ENCODE measurements at regions of chr7 and their contacts with region 1.

Region 1: DNA sequence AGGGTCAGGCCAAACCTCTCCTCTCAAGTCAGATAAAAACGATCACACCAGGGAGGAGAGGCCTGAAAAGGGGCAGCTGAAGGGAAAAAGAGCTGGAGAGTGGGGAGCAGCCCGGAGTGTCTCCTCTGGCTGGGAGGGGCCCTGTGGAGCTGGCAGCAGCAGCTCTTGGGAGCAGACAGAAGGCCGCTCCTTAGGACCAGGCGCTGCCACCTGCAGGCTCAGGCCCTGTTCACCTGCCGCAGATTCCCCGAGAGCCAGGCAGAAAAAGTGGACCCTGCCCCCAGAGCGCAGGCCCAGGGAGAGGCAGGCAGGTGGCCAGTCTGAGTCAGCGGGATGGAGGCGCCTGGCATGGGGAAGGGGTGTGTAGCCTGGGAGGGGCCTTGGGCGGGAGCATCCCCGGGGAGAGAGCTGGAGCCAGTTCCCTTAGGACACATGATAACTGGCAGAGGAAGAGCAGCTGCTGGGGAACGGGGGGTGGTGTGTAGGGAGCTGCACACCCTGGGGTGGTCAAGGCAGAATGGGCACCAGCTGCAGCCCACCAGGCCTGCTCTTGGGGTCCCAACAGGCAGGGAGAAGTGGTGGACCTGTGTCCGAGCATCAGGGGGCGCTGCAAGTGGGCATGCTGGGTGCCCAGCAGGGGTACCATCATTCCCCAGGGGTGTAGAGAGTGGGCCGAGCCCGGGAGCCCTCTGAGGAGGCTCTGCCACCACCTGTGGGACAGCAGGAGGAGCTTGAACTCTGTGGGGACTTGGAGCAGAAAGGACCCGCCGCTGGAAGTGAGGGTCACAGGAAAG is 177.2 kb upstream of the RHEB start:
- DNase-seq: peak; percentile 63
- H3K4me3 ChIP-seq: no peak overlapping the region
- H3K27ac ChIP-seq: peak overlapping the region; percentile 80
- H3K4me1 ChIP-seq: peaks cover 37% of the 10 kb centered on the region
- H3K27me3 ChIP-seq: no peaks in the 10 kb centered on the region
- CTCF ChIP-seq: peak; percentile 9 to 53

Region 2: DNA sequence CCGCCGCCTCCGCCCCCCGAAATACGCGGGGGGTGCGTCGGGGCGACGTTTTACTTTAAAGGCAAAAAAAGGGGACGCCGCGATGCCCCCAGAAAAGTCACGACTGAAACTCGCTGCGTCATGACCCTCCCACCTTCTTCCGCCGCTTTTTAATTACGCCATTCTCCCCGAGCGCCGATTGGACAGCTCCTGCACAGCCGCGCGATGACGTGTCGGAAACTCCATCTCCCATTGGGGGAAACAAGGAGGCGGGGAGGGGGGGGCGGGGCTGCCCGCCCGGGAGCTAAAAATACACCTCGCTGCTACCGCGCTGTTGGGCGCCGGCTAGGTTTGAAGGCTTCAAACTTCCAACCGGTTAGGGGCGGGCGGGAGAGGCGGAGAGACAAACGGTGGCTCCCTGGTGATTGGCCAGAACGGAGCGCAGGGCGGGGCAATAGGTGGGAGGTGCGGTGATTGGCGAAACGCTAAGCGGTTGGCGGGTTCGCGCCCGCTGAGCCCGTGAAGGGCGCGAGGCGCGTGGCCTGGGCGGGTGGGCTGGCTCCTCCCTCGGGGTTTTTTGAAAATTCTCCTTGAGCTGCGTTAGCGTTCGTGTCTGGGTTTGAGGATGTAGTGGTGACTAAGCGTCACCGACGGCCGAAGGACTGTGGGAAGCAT is 177.0 kb before region 1 on chr7 and contains the start of gene RHEB:
- CTCF ChIA-PET with region 1: no interaction called
- dilution Hi-C with region 1: no loop called
- in situ Hi-C with region 1: no loop called
- intact Hi-C with region 1: loop called (anchors 1 kb)
- DNase-seq: peak; percentile 99
- H3K4me3 ChIP-seq: peak within 1 kb of the TSS; percentile 72 to 87 (median 82)
- H3K27ac ChIP-seq: peak within 1 kb of the TSS; percentile 83
- H3K4me1 ChIP-seq: peaks cover 23% of the 10 kb centered on the region
- H3K27me3 ChIP-seq: no peaks in the 10 kb centered on the region
- CTCF ChIP-seq: no peak
- total RNA-seq, gene RHEB: 57.3 to 105 TPM

Region 3: GRCh38 chr7:151608031-151608551 is 88.8 kb before region 1 on chr7:
- CTCF ChIA-PET with region 1: no interaction called
- dilution Hi-C with region 1: loop called (anchors 5 kb)
- in situ Hi-C with region 1: no loop called
- intact Hi-C with region 1: no loop called
- DNase-seq: peak; percentile 73
- H3K4me3 ChIP-seq: no peak overlapping the region
- H3K27ac ChIP-seq: peak overlapping the region; percentile 45
- H3K4me1 ChIP-seq: peaks cover 29% of the 10 kb centered on the region
- H3K27me3 ChIP-seq: no peaks in the 10 kb centered on the region
- CTCF ChIP-seq: peak in 1 of 2 donors; percentile 8

Region 4: GRCh38 chr7:151623766-151624165 is 73.2 kb before region 1 on chr7:
- CTCF ChIA-PET with region 1: no interaction called
- dilution Hi-C with region 1: no loop called
- in situ Hi-C with region 1: no loop called
- intact Hi-C with region 1: no loop called
- DNase-seq: no peak
- H3K4me3 ChIP-seq: no peak overlapping the region
- H3K27ac ChIP-seq: no peak overlapping the region
- H3K4me1 ChIP-seq: peaks cover 15% of the 10 kb centered on the region
- H3K27me3 ChIP-seq: no peaks in the 10 kb centered on the region
- CTCF ChIP-seq: no peak

Region 5: DNA sequence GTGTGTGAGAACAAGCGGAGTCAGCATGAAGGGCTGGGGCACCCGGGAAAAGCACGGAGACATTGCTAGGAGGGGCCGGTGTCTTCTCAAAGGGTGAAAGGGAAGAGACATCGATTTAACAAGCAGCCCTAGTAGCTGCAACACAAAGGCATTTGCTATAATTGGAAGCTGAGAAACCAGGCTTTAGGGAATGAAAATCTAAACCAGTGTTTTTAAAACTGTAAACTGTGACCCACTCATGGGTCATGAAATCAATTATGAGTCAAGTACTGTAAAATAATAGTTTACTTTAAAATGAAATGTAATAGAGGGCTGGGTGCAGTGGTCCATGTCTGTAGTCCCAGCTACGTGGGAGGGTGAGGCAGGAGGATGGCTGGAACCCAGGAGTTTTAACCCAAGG is 48.5 kb before region 1 on chr7:
- CTCF ChIA-PET with region 1: interaction called, 6 read pairs
- dilution Hi-C with region 1: loop called (anchors 10 kb)
- in situ Hi-C with region 1: no loop called
- intact Hi-C with region 1: loop called (anchors 2 kb)
- DNase-seq: no peak
- H3K4me3 ChIP-seq: no peak overlapping the region
- H3K27ac ChIP-seq: no peak overlapping the region
- H3K4me1 ChIP-seq: peaks cover 26% of the 10 kb centered on the region
- H3K27me3 ChIP-seq: no peaks in the 10 kb centered on the region
- CTCF ChIP-seq: no peak

Region 6: DNA sequence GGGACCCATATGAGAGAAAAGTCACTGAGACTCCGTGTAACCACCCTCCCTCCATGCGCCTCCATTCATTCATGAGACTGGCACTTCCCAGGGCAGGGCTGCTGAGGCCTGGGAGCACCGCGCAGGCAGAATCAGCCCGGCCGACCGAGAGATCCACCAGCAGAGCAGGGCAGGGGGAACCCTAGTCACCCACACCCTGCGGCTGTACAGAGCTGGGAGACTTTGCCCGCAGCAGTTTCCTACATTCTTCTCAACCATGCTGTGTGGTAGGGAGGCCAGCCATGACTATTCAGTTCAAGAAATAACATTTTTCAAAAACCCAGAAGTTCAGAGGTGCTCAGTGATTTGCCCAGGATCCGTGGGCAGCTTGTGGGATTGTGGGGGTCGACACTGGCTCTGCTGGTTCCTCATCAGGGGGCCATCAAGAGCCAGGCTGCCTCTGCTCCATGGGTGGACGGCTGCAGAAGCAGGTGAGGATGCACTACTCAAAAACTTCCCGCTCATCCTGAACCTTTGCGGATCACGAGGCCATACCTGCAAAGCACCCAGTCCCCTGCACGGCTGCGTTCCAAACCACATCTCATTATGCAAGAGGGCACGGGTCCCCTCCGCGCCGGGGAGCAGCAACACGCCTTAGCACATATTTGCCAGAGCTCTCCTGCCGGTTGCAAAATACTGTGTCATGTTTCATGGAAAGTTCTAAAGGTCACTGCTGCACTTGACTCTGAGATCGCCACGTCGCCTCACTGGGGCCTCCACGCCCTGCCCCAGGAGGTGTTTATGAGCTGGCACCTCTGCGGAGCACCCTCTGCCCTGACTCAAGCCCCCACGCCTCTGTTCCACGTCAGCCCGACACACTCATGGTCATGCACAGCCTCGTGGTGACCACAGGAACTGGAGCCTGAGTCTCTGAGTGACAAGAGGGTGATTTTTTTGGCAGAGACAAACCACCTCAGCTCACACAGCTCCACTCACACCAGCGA is 48.0 kb after region 1 on chr7:
- CTCF ChIA-PET with region 1: no interaction called
- dilution Hi-C with region 1: loop called (anchors 5 kb)
- in situ Hi-C with region 1: no loop called
- intact Hi-C with region 1: no loop called
- DNase-seq: peak; percentile 61
- H3K4me3 ChIP-seq: no peak overlapping the region
- H3K27ac ChIP-seq: no peak overlapping the region
- H3K4me1 ChIP-seq: peaks cover 11% of the 10 kb centered on the region
- H3K27me3 ChIP-seq: no peaks in the 10 kb centered on the region
- CTCF ChIP-seq: peak; percentile 20 to 45

Region 7: GRCh38 chr7:151773756-151774155 is 76.8 kb after region 1 on chr7:
- CTCF ChIA-PET with region 1: no interaction called
- dilution Hi-C with region 1: no loop called
- in situ Hi-C with region 1: no loop called
- intact Hi-C with region 1: no loop called
- DNase-seq: no peak
- H3K4me3 ChIP-seq: no peak overlapping the region
- H3K27ac ChIP-seq: no peak overlapping the region
- H3K4me1 ChIP-seq: no peaks in the 10 kb centered on the region
- H3K27me3 ChIP-seq: no peaks in the 10 kb centered on the region
- CTCF ChIP-seq: no peak

Measured in mammary epithelial cell (primary cell).